Activated B cell treated with CpG ODN at 0.5 μM for 24 hours (primary cell): ENCODE measurements at regions of chr13 and their contacts with region 1.

Region 1: DNA sequence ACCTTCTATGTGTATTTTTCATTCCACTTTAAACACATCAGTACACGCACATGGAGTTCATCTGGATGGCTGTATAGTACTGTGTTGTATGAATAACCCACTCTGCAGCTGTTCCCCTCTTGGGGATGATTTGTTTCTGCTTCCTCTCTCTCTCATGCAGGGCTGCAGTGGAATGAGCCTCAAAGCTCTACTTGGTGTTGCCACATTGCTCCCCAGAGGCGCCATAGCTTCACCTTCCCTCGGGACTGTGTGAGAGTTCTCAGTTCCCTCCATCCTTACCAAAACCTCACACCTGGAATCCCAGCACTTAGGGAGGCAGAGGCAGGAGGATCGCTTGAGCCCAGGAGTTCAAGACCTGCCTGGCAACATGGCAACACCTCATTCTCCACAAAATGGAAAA is 28.4 kb upstream of the GPR183 start:
- DNase-seq: peak; percentile 40
- ATAC-seq: peak; percentile 94
- H3K4me3 Mint-ChIP-seq: peak overlapping the region; percentile 29
- H3K27ac Mint-ChIP-seq: peak overlapping the region; percentile 77
- H3K4me1 Mint-ChIP-seq: peaks cover 56% of the 10 kb centered on the region
- H3K27me3 Mint-ChIP-seq: no peaks in the 10 kb centered on the region
- CTCF ChIP-seq: no peak

Region 2: GRCh38 chr13:97423300-97424045 is 1912.1 kb before region 1 on chr13:
- CTCF ChIA-PET with region 1: no interaction called
- POLR2A ChIA-PET with region 1: no interaction called
- intact Hi-C with region 1: no loop called
- DNase-seq: no peak
- ATAC-seq: no peak
- H3K4me3 Mint-ChIP-seq: no peak overlapping the region
- H3K27ac Mint-ChIP-seq: no peak overlapping the region
- H3K4me1 Mint-ChIP-seq: peaks cover 2% of the 10 kb centered on the region
- H3K27me3 Mint-ChIP-seq: peaks cover 3% of the 10 kb centered on the region
- CTCF ChIP-seq: no peak

Region 3: DNA sequence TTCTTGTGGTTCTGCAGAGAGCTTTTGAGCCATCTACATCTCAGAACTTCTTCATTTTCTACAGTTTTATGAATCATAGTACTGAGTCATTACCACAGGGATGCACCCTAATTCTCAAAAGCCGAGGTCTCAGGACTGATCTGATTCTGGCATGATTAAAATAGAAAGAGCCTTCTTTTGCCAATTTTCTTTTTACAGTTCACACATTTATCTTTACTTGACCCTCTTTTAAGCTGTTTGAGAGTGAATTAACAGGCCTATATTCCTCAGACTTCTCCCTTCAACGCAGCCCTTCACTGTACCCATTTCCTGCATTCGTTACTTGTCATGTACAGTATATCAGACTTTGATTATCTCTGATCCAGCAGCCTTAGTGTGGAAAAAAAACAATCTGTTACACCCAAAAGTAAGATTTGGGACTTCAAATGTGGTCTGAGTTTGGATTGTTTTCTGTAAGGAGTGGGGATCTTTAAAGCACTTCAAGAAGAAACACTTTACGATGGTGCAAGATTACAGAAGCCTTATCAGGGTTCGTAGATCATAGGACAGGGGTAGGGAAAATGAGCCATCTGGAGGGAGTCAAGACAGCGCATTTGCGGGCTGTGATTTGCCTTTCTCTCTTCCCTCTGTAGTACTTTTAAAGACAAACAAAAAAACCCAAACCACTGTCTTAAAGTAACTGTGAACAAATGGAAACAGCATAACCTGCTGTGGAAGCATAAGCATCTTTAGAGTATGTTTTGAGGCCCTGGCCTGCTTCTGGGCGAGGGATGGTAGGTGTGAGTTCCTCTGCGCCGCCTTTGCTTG is 13.1 kb before region 1 on chr13:
- CTCF ChIA-PET with region 1: interaction called, 5 read pairs
- POLR2A ChIA-PET with region 1: interaction called, 16 read pairs
- intact Hi-C with region 1: loop called (anchors 1 kb)
- DNase-seq: no peak
- ATAC-seq: peak; percentile 87
- H3K4me3 Mint-ChIP-seq: peak overlapping the region; percentile 56
- H3K27ac Mint-ChIP-seq: peak overlapping the region; percentile 91
- H3K4me1 Mint-ChIP-seq: peaks cover 66% of the 10 kb centered on the region
- H3K27me3 Mint-ChIP-seq: no peaks in the 10 kb centered on the region
- CTCF ChIP-seq: no peak

Region 4: GRCh38 chr13:99347911-99348451 is 12.4 kb after region 1 on chr13:
- CTCF ChIA-PET with region 1: interaction called, 4 read pairs
- POLR2A ChIA-PET with region 1: interaction called, 7 read pairs
- intact Hi-C with region 1: loop called (anchors 1 kb)
- DNase-seq: no peak
- ATAC-seq: peak; percentile 68
- H3K4me3 Mint-ChIP-seq: peak overlapping the region; percentile 50
- H3K27ac Mint-ChIP-seq: peak overlapping the region; percentile 82
- H3K4me1 Mint-ChIP-seq: peaks cover 63% of the 10 kb centered on the region
- H3K27me3 Mint-ChIP-seq: no peaks in the 10 kb centered on the region
- CTCF ChIP-seq: no peak

Region 5: GRCh38 chr13:99356158-99357091 is 20.8 kb after region 1 on chr13:
- CTCF ChIA-PET with region 1: interaction called, 3 read pairs
- POLR2A ChIA-PET with region 1: interaction called, 10 read pairs
- intact Hi-C with region 1: no loop called
- DNase-seq: peak; percentile 40
- ATAC-seq: peak; percentile 49
- H3K4me3 Mint-ChIP-seq: peak overlapping the region; percentile 70
- H3K27ac Mint-ChIP-seq: peak overlapping the region; percentile 94
- H3K4me1 Mint-ChIP-seq: peaks cover 97% of the 10 kb centered on the region
- H3K27me3 Mint-ChIP-seq: no peaks in the 10 kb centered on the region
- CTCF ChIP-seq: no peak

Region 6: GRCh38 chr13:99386911-99387788 is 51.5 kb after region 1 on chr13:
- CTCF ChIA-PET with region 1: interaction called, 9 read pairs
- POLR2A ChIA-PET with region 1: interaction called, 6 read pairs
- intact Hi-C with region 1: loop called (anchors 1 kb)
- DNase-seq: peak; percentile 81
- ATAC-seq: peak; percentile 78
- H3K4me3 Mint-ChIP-seq: peak overlapping the region; percentile 12
- H3K27ac Mint-ChIP-seq: peak overlapping the region; percentile 84
- H3K4me1 Mint-ChIP-seq: peaks cover 43% of the 10 kb centered on the region
- H3K27me3 Mint-ChIP-seq: no peaks in the 10 kb centered on the region
- CTCF ChIP-seq: peak; percentile 94

Region 7: DNA sequence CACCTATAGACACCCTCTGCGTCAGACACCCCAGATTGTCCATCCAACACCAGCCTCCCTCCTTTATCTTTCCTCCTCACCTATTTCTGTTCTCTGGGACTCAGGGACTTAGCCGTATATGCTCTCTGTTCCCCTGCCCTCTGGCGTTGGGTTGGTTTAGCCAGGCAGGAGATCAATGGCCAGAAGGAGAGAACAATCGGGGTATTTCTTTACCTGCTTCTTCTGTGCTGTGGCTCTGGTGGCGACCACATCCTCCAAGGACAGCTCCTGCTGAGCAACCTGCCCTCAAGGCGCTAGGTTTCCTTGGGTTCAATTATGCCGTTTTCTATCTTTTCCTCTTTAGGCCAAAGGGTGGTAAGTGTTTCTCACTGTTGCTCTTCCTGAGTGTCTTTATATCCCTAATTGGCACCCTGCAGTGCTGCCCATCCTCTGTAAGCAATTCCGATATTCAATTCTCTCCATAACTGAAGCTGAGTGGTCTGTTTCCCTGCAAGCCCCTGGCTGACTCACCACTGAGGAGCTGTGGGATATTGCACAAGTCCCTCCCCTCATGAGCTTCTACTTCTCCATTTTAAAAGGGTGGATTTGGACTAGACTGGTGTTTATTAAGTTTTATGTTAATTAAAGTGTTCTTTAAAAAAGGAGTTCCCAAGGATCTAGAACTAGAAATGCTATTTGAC is 1402.7 kb after region 1 on chr13:
- CTCF ChIA-PET with region 1: no interaction called
- POLR2A ChIA-PET with region 1: no interaction called
- intact Hi-C with region 1: no loop called
- DNase-seq: no peak
- ATAC-seq: no peak
- H3K4me3 Mint-ChIP-seq: no peak overlapping the region
- H3K27ac Mint-ChIP-seq: no peak overlapping the region
- H3K4me1 Mint-ChIP-seq: no peaks in the 10 kb centered on the region
- H3K27me3 Mint-ChIP-seq: peaks cover 2% of the 10 kb centered on the region
- CTCF ChIP-seq: no peak